Activated CD4-positive, alpha-beta T cell treated with anti-CD3 and anti-CD28 coated beads for 36 hours (primary cell): ENCODE measurements at regions of chr7 and their contacts with region 1.

Region 1: GRCh38 chr7:120039138-120039537 is 233.8 kb upstream of the KCND2 start:
- DNase-seq: no peak
- ATAC-seq: no peak
- H3K4me3 Mint-ChIP-seq: no peak overlapping the region
- H3K27ac Mint-ChIP-seq: no peak overlapping the region
- H3K4me1 Mint-ChIP-seq: no peaks in the 10 kb centered on the region
- H3K27me3 Mint-ChIP-seq: no peaks in the 10 kb centered on the region

Region 2: GRCh38 chr7:119988401-119988800 is 50.7 kb before region 1 on chr7:
- CTCF ChIA-PET with region 1: interaction called, 3 read pairs
- POLR2A ChIA-PET with region 1: no interaction called
- intact Hi-C with region 1: loop called in 1 of 2 experiments (anchors 5 kb)
- DNase-seq: no peak
- ATAC-seq: no peak
- H3K4me3 Mint-ChIP-seq: no peak overlapping the region
- H3K27ac Mint-ChIP-seq: no peak overlapping the region
- H3K4me1 Mint-ChIP-seq: no peaks in the 10 kb centered on the region
- H3K27me3 Mint-ChIP-seq: no peaks in the 10 kb centered on the region